Head of caudate nucleus (tissue), 42 donors: ENCODE measurements at regions of chr11 and their contacts with region 1.

Region 1: DNA sequence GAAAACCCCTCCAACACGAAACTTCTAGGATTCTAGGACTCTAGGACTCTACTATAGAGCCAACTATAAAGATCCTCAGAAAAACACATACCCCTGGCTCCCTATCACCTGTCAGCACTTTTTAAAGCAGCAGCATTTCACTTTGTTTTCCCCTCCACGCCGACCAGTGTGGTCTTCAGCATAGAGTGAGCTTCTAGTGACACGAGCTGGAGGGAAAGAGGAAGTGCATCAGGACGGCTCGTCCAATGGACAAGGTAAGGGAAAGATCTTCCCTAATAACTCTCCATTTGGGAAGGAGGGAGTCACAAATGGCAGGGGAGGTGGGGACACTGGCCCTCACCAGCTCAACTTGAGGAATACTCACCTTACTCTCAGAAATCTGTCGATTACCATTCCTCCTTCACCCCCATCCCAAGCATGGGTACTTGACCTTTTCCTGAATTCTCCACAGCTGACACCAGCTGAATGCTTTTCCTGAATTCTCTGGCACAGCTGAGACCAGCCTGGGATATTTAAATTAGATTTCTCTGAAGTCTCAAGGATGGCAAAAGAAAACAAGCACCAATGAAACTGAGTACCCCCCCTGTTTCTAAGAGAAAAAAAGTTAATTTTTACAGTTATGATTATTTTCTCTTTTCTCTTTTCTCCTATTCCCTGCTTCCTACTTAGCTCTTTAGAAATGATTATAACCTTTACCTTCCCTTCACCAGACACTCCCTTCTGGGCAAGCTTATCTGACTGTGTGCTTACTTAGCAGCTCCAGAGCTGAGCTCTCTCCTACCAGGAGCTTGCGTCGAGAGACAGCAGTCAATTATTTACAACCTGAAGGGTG is 33.3 kb upstream of the NNMT start:
- DNase-seq: peak in 29 of 42 donors; percentile 30 to 80 (median 54)

Region 2: DNA sequence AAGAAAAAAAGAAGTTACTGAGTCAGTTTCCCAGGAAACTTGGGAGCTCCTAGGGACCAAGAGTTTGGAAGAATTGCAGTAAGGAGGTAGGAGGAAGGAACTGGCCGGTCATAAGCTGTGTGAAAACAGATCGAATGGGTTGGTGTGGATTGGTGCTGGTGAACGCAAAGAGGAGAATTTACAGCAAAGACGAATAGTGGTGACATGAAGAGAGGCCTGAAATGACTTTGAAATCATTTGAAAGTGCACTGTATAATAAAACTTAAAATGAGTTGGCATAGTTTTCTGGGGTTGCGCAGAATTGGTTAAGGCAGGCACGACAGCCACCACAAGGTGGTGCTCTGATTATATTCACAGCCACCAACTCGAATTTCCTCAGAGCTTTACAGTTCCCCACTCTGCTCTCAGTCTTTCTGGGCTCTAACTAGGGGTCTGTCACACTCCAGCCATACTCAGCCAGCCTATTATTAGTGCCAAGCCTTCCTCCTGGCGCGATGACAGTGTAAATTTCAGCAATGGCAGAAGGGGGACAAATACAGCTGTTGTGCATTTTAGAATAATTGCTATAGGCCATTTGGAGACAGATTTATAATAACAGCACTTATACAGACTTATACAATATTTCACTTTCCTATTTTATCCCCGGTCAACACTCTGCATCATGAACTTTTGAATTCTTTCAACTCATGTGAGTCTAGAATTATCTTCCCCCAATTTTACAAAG is 366.6 kb before region 1 on chr11:
- intact Hi-C with region 1: loop called (anchors 5 kb)
- DNase-seq: peak; percentile 15 to 80 (median 52)

Region 3: DNA sequence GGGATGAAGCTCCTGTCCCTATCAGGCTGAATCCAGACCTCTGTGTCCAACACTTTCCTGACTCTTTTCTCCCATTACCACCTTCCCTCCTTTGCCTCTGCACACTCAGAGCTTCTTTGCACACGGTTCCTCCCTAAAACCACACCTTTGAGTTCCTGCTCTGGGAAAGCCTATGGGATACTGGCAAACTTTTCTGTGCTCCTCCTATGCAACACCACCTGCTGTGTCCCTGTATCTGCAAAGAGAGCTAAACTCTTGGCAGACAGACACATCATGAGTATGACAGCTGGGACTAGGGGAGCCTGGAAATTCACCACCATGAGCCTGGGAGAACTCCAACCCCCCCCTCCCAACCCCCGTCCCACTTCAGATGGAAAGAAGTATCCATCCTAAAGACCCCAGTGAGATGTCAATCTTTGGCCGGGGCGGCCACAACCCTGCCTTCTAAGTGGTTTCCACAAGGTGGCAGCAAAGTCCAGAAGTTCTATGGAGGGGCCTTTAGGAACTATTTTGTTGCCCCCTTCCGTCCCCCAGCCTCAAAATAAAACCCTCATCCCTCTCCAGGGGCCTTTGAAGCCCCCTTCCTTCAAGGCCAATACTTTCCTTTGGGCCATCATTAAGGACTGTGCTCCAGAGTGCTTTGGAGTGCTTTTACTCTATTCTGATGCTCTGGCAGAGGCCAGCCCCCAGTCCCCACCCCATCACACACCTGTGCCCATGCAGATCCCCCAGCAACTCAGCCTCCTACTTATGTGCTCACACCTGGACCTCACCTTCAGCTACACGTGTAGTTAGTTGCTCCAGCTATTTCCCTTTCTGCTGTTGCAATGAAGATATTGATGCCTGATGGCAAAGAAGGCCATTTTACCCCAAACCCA is 268.6 kb before region 1 on chr11:
- intact Hi-C with region 1: loop called (anchors 2 kb)
- DNase-seq: peak in 29 of 42 donors; percentile 13 to 73 (median 36)

Region 4: DNA sequence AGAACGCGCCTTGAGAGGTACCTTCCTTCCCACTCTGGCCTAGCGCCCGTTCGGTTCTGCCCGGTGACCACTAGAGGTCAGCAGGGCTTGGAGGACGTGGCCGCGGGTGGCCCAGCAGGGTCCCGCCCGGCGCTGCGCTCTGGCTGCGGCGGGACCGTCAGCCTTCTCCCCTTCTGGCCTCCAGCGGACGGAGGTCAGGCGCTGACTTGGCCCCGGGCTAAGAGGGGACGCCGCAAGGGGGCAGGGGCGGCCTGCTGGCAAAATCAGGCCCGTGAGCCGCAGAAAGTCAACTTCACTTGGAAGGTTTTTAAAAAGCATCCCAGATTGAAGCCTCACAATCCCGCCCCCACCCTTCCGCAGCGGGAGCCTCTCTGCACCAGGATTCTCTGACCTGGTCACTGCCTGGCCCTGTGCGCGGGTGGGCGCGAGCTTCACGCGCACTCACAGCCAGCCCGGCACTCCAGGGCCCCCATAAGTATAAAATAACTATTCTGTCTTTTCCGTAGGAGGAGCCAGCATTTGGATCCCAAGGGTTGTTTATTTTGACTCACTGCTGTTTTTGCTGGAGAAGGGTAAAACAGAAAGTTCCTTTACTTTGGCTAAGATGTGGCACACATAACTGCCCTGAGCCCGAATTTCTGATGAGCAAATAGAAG is 226.6 kb before region 1 on chr11:
- intact Hi-C with region 1: loop called (anchors 2 kb)
- DNase-seq: peak; percentile 36 to 91 (median 77)